ENCODE measurements at regions of chr7 and their contacts with region 1.

Region 1: DNA sequence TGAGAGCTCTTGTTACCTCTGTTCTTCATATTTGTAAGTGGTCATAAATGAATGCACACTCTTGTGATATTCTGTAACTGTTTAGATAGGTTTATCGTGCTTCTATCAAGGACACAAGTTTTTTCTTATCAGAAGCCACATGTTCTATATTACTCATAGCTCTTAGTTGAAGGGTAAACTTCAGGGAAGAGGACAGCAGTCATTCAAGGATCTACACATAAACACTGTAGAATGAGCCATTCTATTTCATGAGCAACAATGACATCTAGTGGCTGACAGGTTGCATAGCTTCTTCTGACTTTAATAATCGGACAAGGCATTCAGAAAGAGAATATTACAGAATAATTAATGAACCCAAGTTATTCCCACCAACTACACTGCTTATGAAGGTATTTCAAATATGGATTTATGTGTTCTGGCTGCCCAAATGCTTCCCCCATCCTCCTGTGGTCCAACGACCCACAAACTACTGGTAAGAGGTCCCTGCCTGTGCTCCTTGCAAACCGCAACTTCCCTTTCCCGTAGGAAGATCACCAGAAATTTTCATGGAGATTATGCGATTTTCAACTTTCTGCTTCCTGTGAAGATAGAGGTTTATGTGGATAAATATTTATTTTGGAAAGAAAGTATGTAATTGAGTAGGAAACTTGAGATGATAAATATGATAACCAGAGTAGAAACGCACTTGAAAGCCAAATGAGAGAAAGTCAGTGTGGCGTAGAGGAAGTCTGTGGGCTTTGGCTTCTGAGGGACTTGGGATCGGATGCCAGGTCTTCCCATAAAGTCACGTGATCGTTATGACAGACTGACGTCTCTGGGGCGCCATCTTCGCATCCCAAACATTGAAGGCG is 16.8 kb upstream of the ABCB5 start:
- DNase-seq: peak; percentile 4 to 71
- H3K4me3 ChIP-seq: no peak overlapping the region
- H3K27ac ChIP-seq: no peak overlapping the region
- H3K4me1 ChIP-seq: no peaks in the 10 kb centered on the region; the same call in 1 of the 2 replicates
- H3K27me3 ChIP-seq: no peaks in the 10 kb centered on the region
- CTCF ChIP-seq: peak; percentile 97

Region 2: DNA sequence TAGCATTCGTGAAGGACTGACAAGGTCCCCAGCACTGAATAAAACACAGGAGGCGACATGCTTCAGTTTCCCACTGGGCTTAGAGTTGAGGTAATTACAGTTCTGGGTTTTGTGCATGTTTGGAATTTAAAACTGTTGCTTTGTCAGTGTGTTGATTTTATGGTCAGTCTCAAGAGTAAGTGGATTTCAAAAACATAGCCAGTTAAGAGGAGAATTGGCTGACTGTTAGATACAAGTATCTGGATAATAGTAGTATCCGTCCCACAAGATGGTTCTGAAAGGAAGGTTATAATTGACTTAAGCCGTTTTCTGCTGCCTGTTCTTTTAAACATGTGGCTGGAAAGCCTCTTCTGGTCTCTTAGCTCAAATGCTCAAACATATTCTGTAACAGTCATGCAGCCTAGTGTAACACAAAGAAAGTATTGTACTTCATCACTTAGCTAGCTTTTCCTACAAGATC is 1060.7 kb before region 1 on chr7:
- CTCF ChIA-PET with region 1: no interaction called
- POLR2A ChIA-PET with region 1: no interaction called
- intact Hi-C with region 1: no loop called
- DNase-seq: peak in 1 of 2 experiments; percentile 11
- H3K4me3 ChIP-seq: no peak overlapping the region
- H3K27ac ChIP-seq: no peak overlapping the region
- H3K4me1 ChIP-seq: no peaks in the 10 kb centered on the region
- H3K27me3 ChIP-seq: no peaks in the 10 kb centered on the region
- CTCF ChIP-seq: no peak

Region 3: GRCh38 chr7:19713676-19714075 is 885.0 kb before region 1 on chr7:
- CTCF ChIA-PET with region 1: interaction called, 61 read pairs
- POLR2A ChIA-PET with region 1: interaction called, 5 read pairs
- intact Hi-C with region 1: loop called (anchors 1 kb)
- DNase-seq: peak; percentile 37 to 57
- H3K4me3 ChIP-seq: no peak overlapping the region
- H3K27ac ChIP-seq: no peak overlapping the region
- H3K4me1 ChIP-seq: no peaks in the 10 kb centered on the region
- H3K27me3 ChIP-seq: no peaks in the 10 kb centered on the region
- CTCF ChIP-seq: peak; percentile 81

Region 4: DNA sequence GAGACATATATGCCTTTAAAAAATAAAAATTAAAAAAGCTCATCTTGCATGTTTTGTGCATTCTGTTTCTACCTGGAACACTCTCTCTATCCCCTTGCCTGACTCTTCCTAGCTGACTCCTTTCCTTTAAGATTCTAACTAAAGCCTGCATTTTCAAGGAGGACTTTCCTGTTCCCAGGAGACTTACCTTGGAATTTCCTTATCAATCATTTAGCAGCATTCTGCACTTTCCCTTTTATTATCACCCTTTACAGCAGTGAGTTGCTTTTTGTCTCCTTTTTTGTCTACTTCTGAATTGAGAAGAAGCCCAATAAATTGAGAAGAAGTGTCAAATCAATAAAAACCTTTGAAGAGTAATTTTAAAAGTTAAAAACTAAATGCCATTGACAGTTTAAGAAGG is 683.1 kb before region 1 on chr7:
- CTCF ChIA-PET with region 1: no interaction called
- POLR2A ChIA-PET with region 1: no interaction called
- intact Hi-C with region 1: no loop called
- DNase-seq: no peak
- H3K4me3 ChIP-seq: no peak overlapping the region
- H3K27ac ChIP-seq: peak overlapping the region; percentile 45
- H3K4me1 ChIP-seq: peaks cover 17% of the 10 kb centered on the region
- H3K27me3 ChIP-seq: no peaks in the 10 kb centered on the region
- CTCF ChIP-seq: no peak

Region 5: GRCh38 chr7:19982841-19983835 is 615.5 kb before region 1 on chr7:
- CTCF ChIA-PET with region 1: no interaction called
- POLR2A ChIA-PET with region 1: no interaction called
- intact Hi-C with region 1: loop called (anchors 5 kb)
- DNase-seq: peak in 1 of 2 experiments; percentile 44
- H3K4me3 ChIP-seq: no peak overlapping the region
- H3K27ac ChIP-seq: no peak overlapping the region
- H3K4me1 ChIP-seq: no peaks in the 10 kb centered on the region
- H3K27me3 ChIP-seq: no peaks in the 10 kb centered on the region
- CTCF ChIP-seq: peak; percentile 53; the same call in 1 of the 2 replicates

Region 6: GRCh38 chr7:20158684-20159083 is 440.0 kb before region 1 on chr7:
- CTCF ChIA-PET with region 1: no interaction called
- POLR2A ChIA-PET with region 1: no interaction called
- intact Hi-C with region 1: loop called (anchors 1 kb)
- DNase-seq: no peak
- H3K4me3 ChIP-seq: no peak overlapping the region
- H3K27ac ChIP-seq: no peak overlapping the region
- H3K4me1 ChIP-seq: no peaks in the 10 kb centered on the region
- H3K27me3 ChIP-seq: no peaks in the 10 kb centered on the region
- CTCF ChIP-seq: no peak; the same call in 1 of the 2 replicates

Region 7: GRCh38 chr7:20310963-20311742 is 287.5 kb before region 1 on chr7:
- CTCF ChIA-PET with region 1: interaction called, 4 read pairs
- POLR2A ChIA-PET with region 1: no interaction called
- intact Hi-C with region 1: loop called (anchors 1 kb)
- DNase-seq: peak in 1 of 2 experiments; percentile 56
- H3K4me3 ChIP-seq: no peak overlapping the region
- H3K27ac ChIP-seq: no peak overlapping the region
- H3K4me1 ChIP-seq: no peaks in the 10 kb centered on the region
- H3K27me3 ChIP-seq: no peaks in the 10 kb centered on the region
- CTCF ChIP-seq: peak; percentile 92

Measured in PC-9 (cell line).